ENCODE measurements at regions of chr12 and their contacts with region 1.

Region 1: DNA sequence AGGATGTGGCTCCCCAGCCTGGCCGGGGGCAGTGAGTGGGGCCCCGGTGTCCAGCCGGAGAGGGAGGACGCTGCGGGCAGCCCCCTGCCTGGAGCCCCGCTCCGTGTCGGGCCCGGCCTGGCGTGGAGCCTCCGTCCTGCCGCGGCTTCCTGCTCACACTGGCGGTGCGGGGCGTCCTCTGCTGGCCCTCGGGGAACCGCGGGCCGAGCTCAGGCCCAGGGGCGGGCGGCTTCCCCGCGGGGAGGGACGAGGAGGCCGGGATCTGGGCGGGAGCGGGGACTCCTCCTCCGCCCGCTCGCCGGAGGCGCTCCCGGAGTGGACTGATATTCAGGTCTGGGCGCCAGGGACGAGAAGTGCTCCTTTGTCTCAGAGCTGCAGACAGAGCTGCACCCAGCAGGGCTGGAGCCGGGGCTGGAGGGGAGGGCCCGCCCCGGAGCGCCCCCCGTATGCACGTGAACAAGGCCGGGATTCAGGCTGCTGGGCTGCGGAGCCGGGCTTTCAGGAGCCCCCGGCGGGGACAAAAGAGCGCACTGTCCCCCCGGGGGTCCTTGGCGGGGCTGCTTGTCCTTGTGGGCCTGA is 2.2 kb downstream of the MMP17 start:
- DNase-seq: peak; percentile 87 to 94 (median 88)
- H3K4me3 ChIP-seq: peak overlapping the region; percentile 38
- H3K27ac ChIP-seq: peak overlapping the region; percentile 62 to 76
- H3K4me1 ChIP-seq: peaks cover 8% of the 10 kb centered on the region
- H3K27me3 ChIP-seq: no peaks in the 10 kb centered on the region
- CTCF ChIP-seq: peak; percentile 65 to 85 (median 77)
- EP300 ChIP-seq: no peak
- POLR2A ChIP-seq: peak; percentile 44

Region 2: GRCh38 chr12:131104463-131105350 is 725.7 kb before region 1 on chr12:
- intact Hi-C with region 1: loop called in 3 of 4 experiments (anchors 10 kb)
- DNase-seq: peak; percentile 85 to 94 (median 90)
- H3K4me3 ChIP-seq: no peak overlapping the region
- H3K27ac ChIP-seq: no peak overlapping the region
- H3K4me1 ChIP-seq: peaks cover 1% of the 10 kb centered on the region
- H3K27me3 ChIP-seq: no peaks in the 10 kb centered on the region
- CTCF ChIP-seq: peak; percentile 84 to 96 (median 96)
- EP300 ChIP-seq: no peak
- POLR2A ChIP-seq: no peak

Region 3: GRCh38 chr12:131351319-131352028 is 478.9 kb before region 1 on chr12:
- intact Hi-C with region 1: loop called in 1 of 4 experiments (anchors 10 kb)
- DNase-seq: no peak
- H3K4me3 ChIP-seq: no peak overlapping the region
- H3K27ac ChIP-seq: no peak overlapping the region
- H3K4me1 ChIP-seq: peaks cover 23% of the 10 kb centered on the region
- H3K27me3 ChIP-seq: no peaks in the 10 kb centered on the region
- CTCF ChIP-seq: no peak
- EP300 ChIP-seq: no peak
- POLR2A ChIP-seq: no peak

Region 4: DNA sequence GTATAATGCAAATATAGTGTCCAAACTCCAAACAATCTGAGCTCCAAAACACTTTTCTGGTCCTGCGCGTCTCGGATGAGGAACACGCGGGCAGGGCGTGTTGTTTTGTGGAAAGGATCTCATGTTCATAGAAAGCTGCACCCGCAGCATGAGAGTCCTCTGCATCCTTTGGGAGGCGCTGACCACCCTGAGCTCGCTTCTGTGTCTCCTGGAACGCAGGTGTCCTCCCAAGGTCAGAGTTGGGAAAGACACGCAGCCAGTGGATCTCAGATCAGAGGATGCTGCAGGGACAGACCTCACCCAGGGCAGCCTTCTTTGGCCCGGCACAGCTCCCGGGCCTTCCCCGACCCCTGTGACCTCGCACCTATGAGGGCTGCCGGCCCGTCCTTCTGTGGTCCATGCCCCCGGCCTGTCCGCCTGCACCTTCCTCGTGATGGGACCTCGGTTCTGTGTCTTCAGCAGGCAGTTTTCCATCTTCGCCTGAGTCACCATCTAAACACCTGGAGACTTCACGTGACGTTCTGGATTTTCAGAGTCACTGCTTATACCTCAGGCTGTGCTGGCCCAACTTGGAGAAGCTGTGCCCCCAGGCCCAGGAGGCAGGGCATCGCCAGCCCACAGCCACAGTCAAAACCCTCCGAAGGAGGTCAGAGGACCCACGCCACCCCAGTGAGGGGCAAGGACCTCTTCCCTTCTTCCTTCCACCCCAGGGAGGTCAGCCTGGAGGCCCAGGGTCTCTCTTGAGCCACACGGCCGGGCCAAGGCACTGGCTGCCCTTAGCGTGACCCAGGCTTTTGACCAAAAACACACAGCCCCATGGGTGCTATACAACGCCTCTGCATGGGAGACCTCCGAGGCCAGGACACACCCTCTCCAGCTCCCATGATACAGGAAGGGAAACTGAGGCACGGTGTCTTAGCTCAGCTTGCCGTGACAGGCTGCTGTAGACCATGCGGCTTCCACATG is 23.7 kb after region 1 on chr12:
- intact Hi-C with region 1: loop called in 1 of 4 experiments (anchors 1 kb)
- DNase-seq: peak in 1 of 5 donors; percentile 31
- H3K4me3 ChIP-seq: no peak overlapping the region
- H3K27ac ChIP-seq: no peak overlapping the region
- H3K4me1 ChIP-seq: no peaks in the 10 kb centered on the region
- H3K27me3 ChIP-seq: no peaks in the 10 kb centered on the region
- CTCF ChIP-seq: no peak
- EP300 ChIP-seq: no peak
- POLR2A ChIP-seq: no peak